Esophagus muscularis mucosa (tissue), 4 donors: ENCODE measurements at regions of chr5 and their contacts with region 1.

Region 1: GRCh38 chr5:5492087-5492933 is 69.8 kb downstream of the ICE1 start:
- DNase-seq: no peak
- H3K4me3 ChIP-seq: no peak overlapping the region
- H3K27ac ChIP-seq: no peak overlapping the region
- H3K4me1 ChIP-seq: peaks cover 13 to 43% (median 30%) of the 10 kb centered on the region in 4 donors
- H3K27me3 ChIP-seq: no peaks in the 10 kb centered on the region
- CTCF ChIP-seq: peak; percentile 51 to 73 (median 53)
- EP300 ChIP-seq: no peak
- POLR2A ChIP-seq: no peak

Region 2: DNA sequence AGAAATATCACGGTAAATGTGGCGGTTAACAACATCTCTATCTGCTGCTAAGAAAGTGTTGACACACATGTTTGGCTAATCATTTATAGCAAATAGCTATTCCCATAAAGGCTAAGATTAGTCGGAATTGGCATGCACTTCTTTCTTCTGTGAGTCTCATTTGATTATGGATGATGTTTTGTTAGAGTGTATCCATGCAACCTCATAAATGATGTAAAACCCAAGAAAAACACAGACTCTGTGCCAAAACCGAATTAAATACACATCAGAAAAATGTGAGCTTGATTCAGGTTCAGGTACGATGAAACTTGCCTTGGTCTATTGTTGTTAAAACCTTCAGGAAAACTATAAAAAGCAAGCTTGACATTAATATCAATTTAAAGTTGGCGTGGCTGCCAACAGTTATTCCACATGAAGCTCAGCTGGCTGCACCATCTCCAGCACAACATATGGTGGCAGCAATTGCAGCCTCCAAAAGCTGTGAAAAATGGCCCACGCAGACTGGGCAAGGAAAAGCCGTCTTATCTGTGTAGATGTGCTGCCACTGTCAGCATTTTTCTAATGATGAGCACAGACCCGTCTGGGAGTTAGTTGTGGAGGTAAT is 110.9 kb before region 1 on chr5:
- intact Hi-C with region 1: no loop called
- DNase-seq: no peak
- H3K4me3 ChIP-seq: no peak overlapping the region
- H3K27ac ChIP-seq: no peak overlapping the region
- H3K4me1 ChIP-seq: peaks cover 0 to 19% (median 15%) of the 10 kb centered on the region in 4 donors
- H3K27me3 ChIP-seq: no peaks in the 10 kb centered on the region
- CTCF ChIP-seq: peak in 1 of 3 experiments; percentile 9
- EP300 ChIP-seq: no peak
- POLR2A ChIP-seq: no peak

Region 3: DNA sequence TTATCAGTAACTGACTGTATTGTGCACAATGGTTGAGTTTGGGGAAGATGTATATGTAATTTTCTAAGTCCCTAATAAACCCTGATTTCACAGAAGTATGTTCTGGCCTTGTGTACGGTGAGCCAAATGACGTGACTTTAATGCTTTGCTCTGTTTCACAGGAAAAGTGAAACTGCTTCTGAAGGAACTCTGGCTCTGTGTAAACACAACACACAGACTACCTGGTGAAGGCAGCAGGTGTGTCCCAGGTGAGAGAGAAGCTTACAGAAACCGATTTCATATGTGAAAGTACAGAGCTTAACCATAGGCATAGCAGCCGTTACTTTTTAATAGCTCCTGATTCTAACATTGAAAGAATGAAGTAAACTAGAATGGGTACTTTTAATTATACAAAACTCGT is 37.9 kb before region 1 on chr5:
- intact Hi-C with region 1: no loop called
- DNase-seq: no peak
- H3K4me3 ChIP-seq: no peak overlapping the region
- H3K27ac ChIP-seq: no peak overlapping the region
- H3K4me1 ChIP-seq: no peaks in the 10 kb centered on the region
- H3K27me3 ChIP-seq: no peaks in the 10 kb centered on the region
- CTCF ChIP-seq: no peak
- EP300 ChIP-seq: no peak
- POLR2A ChIP-seq: no peak

Region 4: GRCh38 chr5:5665225-5666075 is 173.1 kb after region 1 on chr5:
- intact Hi-C with region 1: loop called (anchors 10 kb)
- DNase-seq: peak; percentile 66
- H3K4me3 ChIP-seq: no peak overlapping the region
- H3K27ac ChIP-seq: no peak overlapping the region
- H3K4me1 ChIP-seq: peaks cover 0 to 6% (median 0%) of the 10 kb centered on the region in 4 donors
- H3K27me3 ChIP-seq: no peaks in the 10 kb centered on the region
- CTCF ChIP-seq: no peak
- EP300 ChIP-seq: no peak
- POLR2A ChIP-seq: no peak

Region 5: DNA sequence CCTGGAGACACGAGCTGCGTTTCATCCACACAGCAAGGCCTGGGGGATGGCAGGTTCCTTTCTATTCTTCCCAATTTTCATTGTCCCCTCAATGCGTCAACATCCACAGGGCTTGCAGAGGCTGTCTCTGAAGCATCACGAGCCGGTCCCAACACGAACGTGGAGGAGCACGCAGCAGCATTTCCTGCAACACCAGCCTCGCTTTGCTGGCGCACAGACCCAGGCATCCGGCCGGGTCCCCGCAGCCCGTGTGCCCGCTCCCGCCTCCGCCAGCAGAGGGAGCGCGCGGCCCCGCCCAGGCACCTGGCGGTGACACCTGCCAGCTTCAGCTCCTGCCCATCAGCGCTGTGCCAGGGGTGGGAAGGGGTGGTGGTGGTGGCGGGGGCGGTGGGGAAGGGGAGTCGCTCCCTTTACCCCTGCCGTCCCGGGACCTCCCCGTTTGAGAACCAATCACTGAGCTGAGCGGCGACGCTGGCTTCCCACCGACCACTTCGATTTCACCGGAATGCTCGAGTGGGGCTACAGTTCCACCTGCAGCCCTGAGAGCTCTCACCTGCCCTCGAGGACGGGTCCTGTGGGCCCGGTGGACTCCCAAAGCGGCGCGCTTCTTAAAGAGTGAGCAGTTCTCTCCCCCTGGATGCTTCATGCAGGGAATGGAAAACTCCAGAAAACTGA is 394.6 kb after region 1 on chr5:
- intact Hi-C with region 1: loop called (anchors 5 kb)
- DNase-seq: peak; percentile 68
- H3K4me3 ChIP-seq: no peak overlapping the region
- H3K27ac ChIP-seq: no peak overlapping the region
- H3K4me1 ChIP-seq: peaks cover 0 to 6% (median 2%) of the 10 kb centered on the region in 4 donors
- H3K27me3 ChIP-seq: peaks cover 0 to 27% (median 4%) of the 10 kb centered on the region in 4 donors
- CTCF ChIP-seq: peak in 2 of 3 experiments; percentile 28 to 52
- EP300 ChIP-seq: no peak
- POLR2A ChIP-seq: no peak

Region 6: GRCh38 chr5:6377905-6378765 is 885.8 kb after region 1 on chr5 and contains the start of gene MED10:
- intact Hi-C with region 1: loop called (anchors 5 kb)
- DNase-seq: peak; percentile 98
- H3K4me3 ChIP-seq: peak within 1 kb of the TSS; percentile 81 to 98 (median 96)
- H3K27ac ChIP-seq: peak within 1 kb of the TSS; percentile 80 to 93 (median 89)
- H3K4me1 ChIP-seq: peaks cover 19 to 28% (median 26%) of the 10 kb centered on the region in 4 donors
- H3K27me3 ChIP-seq: no peaks in the 10 kb centered on the region
- CTCF ChIP-seq: no peak
- EP300 ChIP-seq: no peak
- POLR2A ChIP-seq: peak; percentile 33
- total RNA-seq, gene MED10: 29.9 to 47.2 (median 35.2) TPM

Region 7: DNA sequence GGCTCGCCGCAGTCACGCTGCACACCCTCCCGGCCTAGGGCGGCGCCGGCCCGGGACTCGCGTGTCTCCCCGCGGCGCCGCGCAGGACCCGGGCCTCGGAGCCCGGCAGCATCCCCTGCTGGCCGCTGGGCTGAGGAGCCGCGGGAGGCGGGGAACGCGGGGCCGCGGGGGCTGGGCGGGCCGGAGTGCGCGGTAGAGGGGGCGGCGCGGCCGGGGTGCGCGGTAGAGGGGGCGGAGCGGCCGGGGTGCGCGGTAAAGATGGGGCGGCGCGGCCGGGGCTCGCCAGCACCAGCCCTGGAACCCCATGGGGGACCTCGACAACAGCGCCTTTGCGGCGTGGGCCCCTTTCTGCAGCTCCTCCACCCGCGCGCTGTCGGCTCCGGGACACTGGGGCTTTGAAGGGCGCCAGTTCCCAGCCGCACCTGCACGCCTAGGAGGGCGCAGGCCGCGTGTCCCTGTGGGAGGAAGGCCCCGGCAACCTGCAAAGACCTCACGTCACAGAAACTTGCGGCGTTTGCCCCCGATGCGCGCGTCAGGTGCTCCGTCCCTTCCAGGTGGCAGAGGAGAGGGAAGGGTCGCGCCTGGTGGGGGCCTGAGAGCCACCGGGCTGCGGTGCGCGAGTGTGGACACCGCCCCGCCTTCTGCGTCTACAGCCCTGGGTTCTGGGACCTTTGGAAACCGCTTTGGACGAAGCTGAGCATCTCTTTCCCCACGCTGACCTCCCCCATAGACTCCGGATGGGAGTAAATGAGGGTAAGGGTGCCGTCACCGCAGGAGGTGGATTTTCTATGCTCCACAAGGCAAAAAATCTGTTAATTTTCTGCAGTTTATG is 1091.0 kb after region 1 on chr5:
- intact Hi-C with region 1: loop called (anchors 5 kb)
- DNase-seq: peak; percentile 53
- H3K4me3 ChIP-seq: peak overlapping the region; percentile 56 to 68 (median 60)
- H3K27ac ChIP-seq: no peak overlapping the region
- H3K4me1 ChIP-seq: peaks cover 8 to 14% (median 13%) of the 10 kb centered on the region in 4 donors
- H3K27me3 ChIP-seq: peaks cover 0 to 13% (median 0%) of the 10 kb centered on the region in 4 donors
- CTCF ChIP-seq: peak; percentile 44 to 66 (median 46)
- EP300 ChIP-seq: no peak
- POLR2A ChIP-seq: no peak